ENCODE measurements at regions of chr1 and their contacts with region 1.

Region 1: GRCh38 chr1:160085686-160086455 is 4.5 kb downstream of the KCNJ9 start:
- DNase-seq: peak; percentile 86
- H3K4me3 ChIP-seq: no peak overlapping the region
- H3K27ac ChIP-seq: peak overlapping the region in 2 of 4 donors; percentile 13 to 50
- H3K4me1 ChIP-seq: peaks cover 0 to 13% (median 8%) of the 10 kb centered on the region in 4 donors
- H3K27me3 ChIP-seq: peaks cover 31% of the 10 kb centered on the region
- CTCF ChIP-seq: peak; percentile 78 to 90 (median 87)
- EP300 ChIP-seq: no peak
- POLR2A ChIP-seq: no peak

Region 2: DNA sequence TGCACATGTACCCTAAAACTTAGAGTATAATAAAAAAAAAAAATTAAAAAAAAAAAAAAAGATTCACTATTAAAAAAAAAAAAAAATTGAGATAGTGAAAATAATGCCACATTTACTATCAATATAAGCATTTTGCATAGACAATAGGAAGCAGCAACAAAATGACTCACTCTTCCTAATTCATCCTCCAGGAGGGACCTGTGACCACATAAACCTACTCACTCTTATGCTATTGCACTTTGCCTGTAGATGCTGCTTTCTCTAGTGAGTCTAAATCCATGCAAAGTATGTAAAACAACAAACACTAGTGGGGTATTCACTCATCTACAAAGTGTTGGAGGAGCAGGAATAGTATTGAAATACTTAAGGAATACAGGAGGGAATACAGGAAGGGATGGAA is 552.9 kb before region 1 on chr1:
- in situ Hi-C with region 1: no loop called
- intact Hi-C with region 1: loop called (anchors 5 kb)
- DNase-seq: no peak
- H3K4me3 ChIP-seq: no peak overlapping the region
- H3K27ac ChIP-seq: no peak overlapping the region
- H3K4me1 ChIP-seq: no peaks in the 10 kb centered on the region
- H3K27me3 ChIP-seq: no peaks in the 10 kb centered on the region
- CTCF ChIP-seq: no peak
- EP300 ChIP-seq: no peak
- POLR2A ChIP-seq: no peak

Region 3: GRCh38 chr1:159562680-159563079 is 523.2 kb before region 1 on chr1:
- in situ Hi-C with region 1: no loop called
- intact Hi-C with region 1: no loop called
- DNase-seq: no peak
- H3K4me3 ChIP-seq: no peak overlapping the region
- H3K27ac ChIP-seq: no peak overlapping the region
- H3K4me1 ChIP-seq: no peaks in the 10 kb centered on the region
- H3K27me3 ChIP-seq: no peaks in the 10 kb centered on the region
- CTCF ChIP-seq: no peak
- EP300 ChIP-seq: no peak
- POLR2A ChIP-seq: no peak

Region 4: DNA sequence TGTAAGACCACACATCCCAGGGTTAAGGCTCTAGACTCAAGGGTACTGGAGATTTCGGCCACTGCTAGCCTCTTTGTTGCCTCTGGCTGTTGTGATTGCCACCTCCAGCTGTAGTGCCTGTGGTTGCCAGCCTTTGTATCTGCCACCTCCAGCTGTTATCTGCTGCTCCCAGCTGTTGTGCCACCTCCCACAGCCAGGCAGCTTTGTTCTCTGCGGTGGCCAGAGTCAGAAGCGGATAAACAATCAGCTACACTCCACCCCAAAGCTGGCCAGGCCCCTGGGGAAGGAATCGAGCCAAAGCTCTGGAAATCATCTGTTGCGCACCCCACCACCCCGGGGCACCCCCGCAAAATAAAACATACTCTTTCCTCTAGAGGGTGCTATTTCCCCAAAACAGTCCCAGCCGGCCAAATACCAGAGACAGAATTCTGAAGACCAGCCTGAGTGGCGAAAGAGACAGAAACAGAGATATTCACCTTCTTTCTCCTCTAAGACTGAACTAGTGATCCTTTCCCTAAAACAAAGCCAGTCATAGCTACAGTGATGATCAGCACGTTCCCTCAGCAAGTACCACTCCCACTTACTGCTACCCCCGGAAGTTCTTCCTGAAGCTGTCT is 39.3 kb before region 1 on chr1:
- in situ Hi-C with region 1: no loop called
- intact Hi-C with region 1: loop called (anchors 2 kb)
- DNase-seq: peak; percentile 50
- H3K4me3 ChIP-seq: no peak overlapping the region
- H3K27ac ChIP-seq: peak overlapping the region in 1 of 4 donors; percentile 31
- H3K4me1 ChIP-seq: peaks cover 6 to 16% (median 12%) of the 10 kb centered on the region in 4 donors
- H3K27me3 ChIP-seq: peaks cover 2% of the 10 kb centered on the region
- CTCF ChIP-seq: peak; percentile 61 to 72 (median 67)
- EP300 ChIP-seq: no peak
- POLR2A ChIP-seq: no peak